ENCODE measurements at regions of chr3 and their contacts with region 1.

Region 1: GRCh38 chr3:47984097-47984728 is 32.0 kb downstream of the MAP4 start:
- DNase-seq: no peak
- ATAC-seq: no peak
- H3K4me3 ChIP-seq: no peak overlapping the region
- H3K4me3 Mint-ChIP-seq: no peak overlapping the region
- H3K27ac ChIP-seq: no peak overlapping the region
- H3K27ac Mint-ChIP-seq: no peak overlapping the region
- H3K4me1 ChIP-seq: no peaks in the 10 kb centered on the region
- H3K4me1 Mint-ChIP-seq: no peaks in the 10 kb centered on the region
- H3K27me3 ChIP-seq: no peaks in the 10 kb centered on the region
- H3K27me3 Mint-ChIP-seq: no peaks in the 10 kb centered on the region
- CTCF ChIP-seq: no peak

Region 2: DNA sequence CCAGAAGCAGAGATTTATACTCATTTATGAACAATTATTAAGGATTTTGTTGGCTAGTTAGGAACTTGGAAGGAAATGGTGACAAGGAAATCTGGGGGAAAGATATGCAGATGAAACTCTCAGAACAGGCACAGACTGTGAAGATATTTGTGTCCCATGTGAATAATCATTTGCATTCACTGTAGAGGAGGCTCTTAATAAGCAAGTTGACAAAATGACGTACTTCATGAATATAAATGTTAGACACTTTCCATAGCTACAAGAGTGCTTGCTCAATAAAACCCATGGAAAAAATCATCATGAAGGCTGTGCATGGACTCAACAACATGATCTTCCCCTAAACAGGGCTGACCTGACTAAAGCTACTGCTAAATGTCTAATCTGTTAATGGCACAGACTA is 27.7 kb before region 1 on chr3:
- CTCF ChIA-PET with region 1: interaction called, 10 read pairs
- POLR2A ChIA-PET with region 1: no interaction called
- intact Hi-C with region 1: no loop called
- DNase-seq: no peak
- ATAC-seq: no peak
- H3K4me3 ChIP-seq: no peak overlapping the region
- H3K4me3 Mint-ChIP-seq: no peak overlapping the region
- H3K27ac ChIP-seq: no peak overlapping the region
- H3K27ac Mint-ChIP-seq: no peak overlapping the region
- H3K4me1 ChIP-seq: peaks cover 7% of the 10 kb centered on the region
- H3K4me1 Mint-ChIP-seq: peaks cover 11% of the 10 kb centered on the region
- H3K27me3 ChIP-seq: no peaks in the 10 kb centered on the region
- H3K27me3 Mint-ChIP-seq: no peaks in the 10 kb centered on the region
- CTCF ChIP-seq: no peak